Naive thymus-derived CD4-positive, alpha-beta T cell (primary cell): ENCODE measurements at regions of chr3 and their contacts with region 1.

Region 1: GRCh38 chr3:156978481-156978961 is 152.4 kb downstream of the LEKR1 start:
- DNase-seq: no peak
- ATAC-seq: peak; percentile 31
- H3K4me3 ChIP-seq: no peak overlapping the region
- H3K4me3 Mint-ChIP-seq: peak overlapping the region in 1 of 10 donors; percentile 20
- H3K27ac ChIP-seq: no peak overlapping the region
- H3K27ac Mint-ChIP-seq: no peak overlapping the region
- H3K4me1 ChIP-seq: no peaks in the 10 kb centered on the region
- H3K4me1 Mint-ChIP-seq: peaks cover 0 to 9% (median 7%) of the 10 kb centered on the region in 7 donors
- H3K27me3 ChIP-seq: no peaks in the 10 kb centered on the region
- H3K27me3 Mint-ChIP-seq: peaks cover 0 to 28% (median 0%) of the 10 kb centered on the region in 5 donors

Region 2: DNA sequence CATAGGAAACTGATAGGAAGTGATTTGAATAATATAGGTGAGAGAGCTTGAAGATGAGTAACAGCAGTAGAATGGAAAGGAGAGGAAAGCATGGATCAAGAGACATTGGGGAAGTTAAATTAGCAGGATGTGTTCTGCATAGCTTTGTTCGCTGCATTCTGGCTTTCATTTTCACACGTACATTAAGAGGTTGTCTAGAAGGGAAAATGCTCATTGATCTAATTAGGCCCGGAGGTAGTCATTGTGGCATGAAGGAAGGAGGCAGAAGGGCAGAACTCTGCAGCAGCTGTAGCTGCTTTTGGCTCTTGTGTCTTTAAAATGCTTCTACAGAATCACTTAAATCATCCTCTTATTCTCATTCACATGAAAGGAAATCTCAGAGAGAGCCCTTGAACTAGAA is 817.9 kb before region 1 on chr3:
- CTCF ChIA-PET with region 1: no interaction called
- POLR2A ChIA-PET with region 1: no interaction called
- intact Hi-C with region 1: no loop called
- DNase-seq: peak in 1 of 9 donors; percentile 4
- ATAC-seq: no peak
- H3K4me3 ChIP-seq: peak overlapping the region; percentile 24
- H3K4me3 Mint-ChIP-seq: peak overlapping the region; percentile 0 to 68 (median 44)
- H3K27ac ChIP-seq: no peak overlapping the region
- H3K27ac Mint-ChIP-seq: peak overlapping the region in 7 of 9 donors; percentile 0 to 69 (median 16)
- H3K4me1 ChIP-seq: peaks cover 6 to 10% of the 10 kb centered on the region in 2 donors
- H3K4me1 Mint-ChIP-seq: peaks cover 5 to 21% (median 16%) of the 10 kb centered on the region in 7 donors
- H3K27me3 ChIP-seq: no peaks in the 10 kb centered on the region
- H3K27me3 Mint-ChIP-seq: peaks cover 0 to 9% (median 0%) of the 10 kb centered on the region in 5 donors

Region 3: GRCh38 chr3:156888176-156888575 is 90.3 kb before region 1 on chr3:
- CTCF ChIA-PET with region 1: no interaction called
- POLR2A ChIA-PET with region 1: no interaction called
- intact Hi-C with region 1: loop called in 1 of 2 experiments (anchors 10 kb)
- DNase-seq: no peak
- ATAC-seq: no peak
- H3K4me3 ChIP-seq: no peak overlapping the region
- H3K4me3 Mint-ChIP-seq: no peak overlapping the region
- H3K27ac ChIP-seq: no peak overlapping the region
- H3K27ac Mint-ChIP-seq: no peak overlapping the region
- H3K4me1 ChIP-seq: no peaks in the 10 kb centered on the region
- H3K4me1 Mint-ChIP-seq: no peaks in the 10 kb centered on the region
- H3K27me3 ChIP-seq: no peaks in the 10 kb centered on the region
- H3K27me3 Mint-ChIP-seq: peaks cover 0 to 37% (median 0%) of the 10 kb centered on the region in 5 donors

Region 4: GRCh38 chr3:156997351-156997750 is 18.8 kb after region 1 on chr3:
- CTCF ChIA-PET with region 1: no interaction called
- POLR2A ChIA-PET with region 1: no interaction called
- intact Hi-C with region 1: no loop called
- DNase-seq: no peak
- ATAC-seq: no peak
- H3K4me3 ChIP-seq: no peak overlapping the region
- H3K4me3 Mint-ChIP-seq: no peak overlapping the region
- H3K27ac ChIP-seq: no peak overlapping the region
- H3K27ac Mint-ChIP-seq: no peak overlapping the region
- H3K4me1 ChIP-seq: no peaks in the 10 kb centered on the region
- H3K4me1 Mint-ChIP-seq: no peaks in the 10 kb centered on the region
- H3K27me3 ChIP-seq: no peaks in the 10 kb centered on the region
- H3K27me3 Mint-ChIP-seq: peaks cover 0 to 36% (median 12%) of the 10 kb centered on the region in 5 donors